ENCODE measurements at regions of chr13 and their contacts with region 1.

Region 1: GRCh38 chr13:41061075-41061913 is at the start of gene WBP4:
- DNase-seq: peak; percentile 95 to 97
- ATAC-seq: peak; percentile 81 to 85 (median 84)
- H3K4me3 ChIP-seq: peak within 1 kb of the TSS; percentile 88
- H3K27ac ChIP-seq: peak within 1 kb of the TSS; percentile 98
- H3K4me1 ChIP-seq: peaks cover 64% of the 10 kb centered on the region
- H3K27me3 ChIP-seq: no peaks in the 10 kb centered on the region
- CTCF ChIP-seq: no peak
- total RNA-seq, gene WBP4: 18.8 to 24.9 (median 21.6) TPM

Region 2: GRCh38 chr13:40770934-40771618 is 290.2 kb before region 1 on chr13 and contains the start of gene MRPS31:
- intact Hi-C with region 1: loop called in 1 of 2 experiments (anchors 10 kb)
- DNase-seq: peak; percentile 96 to 97
- ATAC-seq: peak; percentile 100
- H3K4me3 ChIP-seq: peak within 1 kb of the TSS; percentile 88
- H3K27ac ChIP-seq: peak within 1 kb of the TSS; percentile 74
- H3K4me1 ChIP-seq: peaks cover 9% of the 10 kb centered on the region
- H3K27me3 ChIP-seq: no peaks in the 10 kb centered on the region
- CTCF ChIP-seq: no peak
- total RNA-seq, gene MRPS31: 23.3 to 27.2 (median 25.5) TPM

Region 3: GRCh38 chr13:41132512-41133152 is 71.3 kb after region 1 on chr13 and contains the start of gene KBTBD6:
- intact Hi-C with region 1: loop called (anchors 5 to 10 kb)
- DNase-seq: peak; percentile 98
- ATAC-seq: peak; percentile 98 to 99 (median 98)
- H3K4me3 ChIP-seq: peak within 1 kb of the TSS; percentile 85
- H3K27ac ChIP-seq: peak within 1 kb of the TSS; percentile 90
- H3K4me1 ChIP-seq: peaks cover 30% of the 10 kb centered on the region
- H3K27me3 ChIP-seq: no peaks in the 10 kb centered on the region
- CTCF ChIP-seq: no peak
- total RNA-seq, gene KBTBD6: 2.4 to 6.0 (median 5.6) TPM